Ascending aorta (tissue), 2 donors: ENCODE measurements at regions of chr2 and their contacts with region 1.

Region 1: DNA sequence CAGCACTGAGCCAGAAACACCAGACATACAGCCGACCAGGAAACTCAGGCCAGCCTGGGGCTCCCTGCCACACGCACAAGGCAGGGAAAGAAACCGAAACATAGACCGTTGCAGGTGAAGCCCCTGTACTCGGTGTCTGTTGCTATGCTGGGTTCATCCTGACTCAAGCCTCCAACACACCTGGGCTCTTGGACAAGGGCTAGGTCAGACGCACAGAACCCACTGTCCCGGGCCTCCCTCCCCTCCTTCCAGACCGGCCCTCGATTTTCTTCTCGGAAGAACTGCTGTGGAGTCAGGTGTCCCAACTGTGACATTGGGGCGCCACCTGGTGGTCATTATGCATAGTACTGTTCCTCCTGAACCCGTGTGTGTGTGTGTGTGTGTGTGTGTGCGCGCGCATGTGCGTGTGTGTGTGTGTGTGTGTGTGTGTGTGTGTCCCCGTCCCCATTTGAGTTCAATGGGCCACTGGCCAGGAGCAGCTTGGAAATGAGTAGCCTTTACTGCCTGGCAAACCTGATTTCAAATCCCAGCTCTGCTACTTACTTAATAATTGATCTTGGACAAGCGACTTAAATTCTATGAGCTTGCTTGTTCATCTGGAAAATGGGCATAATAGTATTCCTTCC is 55.4 kb upstream of the GLI2 start:
- DNase-seq: peak in 1 of 2 donors; percentile 90
- H3K4me3 ChIP-seq: no peak overlapping the region
- H3K27ac ChIP-seq: no peak overlapping the region
- H3K4me1 ChIP-seq: peaks cover 0 to 5% of the 10 kb centered on the region in 2 donors
- H3K27me3 ChIP-seq: peaks cover 8% of the 10 kb centered on the region
- CTCF ChIP-seq: peak; percentile 57 to 75 (median 67)

Region 2: GRCh38 chr2:120441744-120442471 is 238.3 kb before region 1 on chr2:
- intact Hi-C with region 1: loop called (anchors 5 kb)
- DNase-seq: peak in 1 of 2 donors; percentile 78
- H3K4me3 ChIP-seq: peak overlapping the region; percentile 41 to 64
- H3K27ac ChIP-seq: no peak overlapping the region
- H3K4me1 ChIP-seq: peaks cover 6 to 7% of the 10 kb centered on the region in 2 donors
- H3K27me3 ChIP-seq: peaks cover 6% of the 10 kb centered on the region
- CTCF ChIP-seq: no peak